ENCODE measurements at regions of chr17 and their contacts with region 1.

Region 1: DNA sequence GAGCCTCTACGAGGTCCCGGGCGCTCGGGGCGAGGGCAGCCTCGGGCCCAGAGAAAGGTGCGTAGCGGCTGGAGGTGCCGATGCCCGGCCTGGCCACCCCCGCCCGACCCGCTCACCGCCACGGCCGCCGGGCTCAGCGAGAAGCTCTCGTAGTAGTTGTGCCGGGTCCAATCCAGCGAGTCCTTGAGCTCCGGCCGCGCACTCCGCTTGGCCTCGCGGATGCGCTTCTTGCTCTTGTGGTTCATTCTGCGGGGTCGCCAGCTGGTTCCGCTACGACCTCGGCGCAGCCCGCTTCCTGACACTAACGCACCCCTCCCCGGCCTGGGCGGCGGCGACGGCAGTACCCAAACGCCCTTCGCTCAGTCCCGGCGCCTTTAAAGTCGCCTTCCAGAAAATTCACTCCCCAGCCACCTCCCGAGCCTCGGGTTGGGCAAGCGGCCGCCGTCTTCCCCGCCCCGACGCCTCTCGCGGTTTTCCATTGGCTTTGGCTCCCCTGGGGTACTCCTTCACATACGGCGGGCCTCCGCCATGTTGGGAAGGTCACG is at the start of gene JMJD6:
- DNase-seq: peak in 11 of 14 experiments; percentile 88 to 98 (median 92)
- ATAC-seq: peak; percentile 81
- H3K4me3 ChIP-seq: peak within 1 kb of the TSS; percentile 77
- H3K4me3 Mint-ChIP-seq: peak within 1 kb of the TSS; percentile 100
- H3K27ac ChIP-seq: peak within 1 kb of the TSS; percentile 93 to 97
- H3K27ac Mint-ChIP-seq: peak within 1 kb of the TSS; percentile 99
- H3K4me1 ChIP-seq: peaks cover 80% of the 10 kb centered on the region
- H3K4me1 Mint-ChIP-seq: peaks cover 50% of the 10 kb centered on the region
- H3K27me3 ChIP-seq: no peaks in the 10 kb centered on the region
- H3K27me3 Mint-ChIP-seq: no peaks in the 10 kb centered on the region
- CTCF ChIP-seq: no peak
- total RNA-seq, gene JMJD6: 133 to 134 TPM

Region 2: DNA sequence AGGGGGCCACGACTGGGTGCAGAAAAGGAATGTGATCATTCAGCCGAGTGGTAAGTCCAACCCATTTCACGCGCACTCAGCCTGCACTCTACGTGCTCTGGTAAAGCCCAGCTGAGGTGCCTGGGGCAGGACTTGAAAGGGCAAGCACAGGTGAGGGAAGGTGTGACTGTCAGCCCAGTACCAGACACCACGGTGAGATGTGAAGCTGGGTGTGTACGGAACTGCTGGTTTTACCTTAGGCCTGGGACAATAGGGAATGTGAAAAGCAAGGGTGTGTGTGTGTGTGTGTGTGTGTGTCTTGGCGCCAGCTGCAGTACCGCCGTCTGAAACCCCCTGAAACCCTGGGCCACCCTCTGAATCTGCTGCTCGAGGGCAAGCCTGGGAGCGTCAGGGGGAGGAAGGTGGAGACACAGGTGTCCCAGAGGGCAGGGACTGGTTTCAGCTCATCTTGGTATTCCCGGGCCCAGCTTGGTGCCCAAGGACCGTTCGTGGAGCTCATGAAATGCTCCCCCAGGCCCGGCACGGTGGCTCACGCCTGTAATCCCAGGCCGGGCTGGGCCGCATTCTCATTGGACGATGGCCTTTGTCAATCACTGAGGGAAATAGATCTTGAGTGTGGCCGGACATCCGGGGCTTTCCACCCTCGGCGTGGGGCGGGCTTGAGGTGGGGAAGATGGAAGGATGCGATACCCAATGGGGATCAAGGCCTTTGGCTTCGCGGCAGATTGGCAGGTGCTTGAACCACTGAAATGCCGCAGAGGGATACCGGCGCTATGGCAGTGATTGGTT is 55.0 kb before region 1 on chr17:
- CTCF ChIA-PET with region 1: no interaction called
- POLR2A ChIA-PET with region 1: interaction called, 19 read pairs
- intact Hi-C with region 1: loop called (anchors 5 kb)
- DNase-seq: peak; percentile 95 to 100 (median 98)
- ATAC-seq: peak; percentile 98
- H3K4me3 ChIP-seq: peak overlapping the region; percentile 69
- H3K4me3 Mint-ChIP-seq: peak overlapping the region; percentile 88
- H3K27ac ChIP-seq: peak overlapping the region; percentile 72 to 81
- H3K27ac Mint-ChIP-seq: peak overlapping the region; percentile 93
- H3K4me1 ChIP-seq: peaks cover 30% of the 10 kb centered on the region
- H3K4me1 Mint-ChIP-seq: peaks cover 35% of the 10 kb centered on the region
- H3K27me3 ChIP-seq: no peaks in the 10 kb centered on the region
- H3K27me3 Mint-ChIP-seq: no peaks in the 10 kb centered on the region
- CTCF ChIP-seq: no peak

Region 3: GRCh38 chr17:76737082-76737675 is 10.9 kb after region 1 on chr17 and contains the start of gene SRSF2:
- CTCF ChIA-PET with region 1: interaction called, 15 read pairs
- POLR2A ChIA-PET with region 1: interaction called, 165 read pairs
- intact Hi-C with region 1: loop called (anchors 1 kb)
- DNase-seq: peak; percentile 95 to 99 (median 98)
- ATAC-seq: peak; percentile 64
- H3K4me3 ChIP-seq: peak within 1 kb of the TSS; percentile 96
- H3K4me3 Mint-ChIP-seq: peak within 1 kb of the TSS; percentile 96
- H3K27ac ChIP-seq: peak within 1 kb of the TSS; percentile 99
- H3K27ac Mint-ChIP-seq: peak within 1 kb of the TSS; percentile 96
- H3K4me1 ChIP-seq: peaks cover 37% of the 10 kb centered on the region
- H3K4me1 Mint-ChIP-seq: peaks cover 60% of the 10 kb centered on the region
- H3K27me3 ChIP-seq: no peaks in the 10 kb centered on the region
- H3K27me3 Mint-ChIP-seq: no peaks in the 10 kb centered on the region
- CTCF ChIP-seq: no peak
- total RNA-seq, gene SRSF2: 448 to 460 TPM

Region 4: GRCh38 chr17:76781056-76781982 is 55.0 kb after region 1 on chr17:
- CTCF ChIA-PET with region 1: interaction called, 3 read pairs
- POLR2A ChIA-PET with region 1: no interaction called
- intact Hi-C with region 1: loop called in 1 of 2 experiments (anchors 5 kb)
- DNase-seq: peak in 4 of 14 experiments; percentile 19 to 42 (median 38)
- ATAC-seq: peak; percentile 62
- H3K4me3 ChIP-seq: no peak overlapping the region
- H3K4me3 Mint-ChIP-seq: no peak overlapping the region
- H3K27ac ChIP-seq: no peak overlapping the region
- H3K27ac Mint-ChIP-seq: peak overlapping the region; percentile 17
- H3K4me1 ChIP-seq: no peaks in the 10 kb centered on the region
- H3K4me1 Mint-ChIP-seq: no peaks in the 10 kb centered on the region
- H3K27me3 ChIP-seq: no peaks in the 10 kb centered on the region
- H3K27me3 Mint-ChIP-seq: no peaks in the 10 kb centered on the region
- CTCF ChIP-seq: no peak

Region 5: DNA sequence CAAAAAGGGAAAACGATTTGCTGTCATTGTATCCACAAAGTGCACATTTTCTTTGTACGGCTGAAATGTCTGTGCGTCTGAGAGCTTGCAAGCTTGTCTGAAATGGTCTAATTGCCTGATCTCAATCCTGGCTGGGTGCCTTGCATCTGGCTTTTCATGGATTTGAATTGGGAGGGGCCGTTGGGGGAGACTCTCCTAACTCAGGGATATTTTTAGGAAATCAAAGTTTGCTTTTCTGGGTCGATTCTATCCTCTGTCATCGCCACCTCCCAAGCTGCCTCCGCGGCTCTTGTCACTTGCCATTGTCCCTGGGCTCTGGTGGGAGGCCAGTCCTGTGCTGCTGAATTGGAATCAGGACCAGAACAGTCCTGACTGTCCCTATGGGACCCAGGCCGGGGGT is 108.6 kb after region 1 on chr17:
- CTCF ChIA-PET with region 1: no interaction called
- POLR2A ChIA-PET with region 1: no interaction called
- intact Hi-C with region 1: loop called in 1 of 2 experiments (anchors 5 kb)
- DNase-seq: no peak
- ATAC-seq: no peak
- H3K4me3 ChIP-seq: no peak overlapping the region
- H3K4me3 Mint-ChIP-seq: no peak overlapping the region
- H3K27ac ChIP-seq: no peak overlapping the region
- H3K27ac Mint-ChIP-seq: no peak overlapping the region
- H3K4me1 ChIP-seq: peaks cover 7% of the 10 kb centered on the region
- H3K4me1 Mint-ChIP-seq: peaks cover 3% of the 10 kb centered on the region
- H3K27me3 ChIP-seq: peaks cover 0 to 1% of the 10 kb centered on the region in 2 experiments
- H3K27me3 Mint-ChIP-seq: peaks cover 9% of the 10 kb centered on the region
- CTCF ChIP-seq: no peak

Region 6: DNA sequence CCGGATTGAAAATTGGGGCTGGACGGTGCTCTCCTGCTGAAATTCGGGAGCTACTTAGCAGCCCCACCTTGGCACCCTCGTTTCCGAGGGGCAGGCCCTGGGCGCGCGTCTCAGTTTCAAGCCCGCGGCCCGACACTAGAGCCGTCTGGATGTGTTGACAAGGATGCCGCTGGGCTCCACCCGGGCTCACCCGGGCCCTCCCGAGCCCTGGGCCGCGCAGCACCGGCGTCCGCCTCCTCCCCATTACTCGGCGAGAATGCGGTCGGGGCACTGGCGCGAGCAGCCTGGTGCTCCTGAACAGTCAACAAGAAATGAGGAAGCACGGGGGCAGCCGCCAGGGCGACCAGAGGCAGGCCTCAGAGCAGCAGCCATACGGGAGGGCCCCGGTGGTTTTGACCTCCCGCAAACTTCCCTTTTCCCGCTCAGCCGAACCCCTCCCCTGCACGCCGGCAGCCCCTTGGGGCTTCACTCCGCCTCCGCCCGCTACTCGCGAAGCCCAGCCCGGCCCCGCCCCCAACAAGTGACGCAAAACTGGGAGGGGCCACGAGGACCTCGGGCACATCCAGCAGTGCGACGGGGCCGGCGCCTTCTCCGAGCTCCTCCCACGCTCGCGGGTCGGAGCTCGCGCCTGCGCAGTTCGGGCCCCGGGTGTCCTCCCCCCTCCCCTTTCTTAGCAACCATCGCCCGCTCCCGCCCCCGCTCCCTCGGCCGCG is 414.0 kb after region 1 on chr17:
- CTCF ChIA-PET with region 1: no interaction called
- POLR2A ChIA-PET with region 1: no interaction called
- intact Hi-C with region 1: loop called in 1 of 2 experiments (anchors 5 kb)
- DNase-seq: peak; percentile 99 to 100 (median 100)
- ATAC-seq: peak; percentile 88
- H3K4me3 ChIP-seq: peak overlapping the region; percentile 74
- H3K4me3 Mint-ChIP-seq: peak overlapping the region; percentile 90
- H3K27ac ChIP-seq: peak overlapping the region; percentile 84 to 86
- H3K27ac Mint-ChIP-seq: peak overlapping the region; percentile 95
- H3K4me1 ChIP-seq: peaks cover 46% of the 10 kb centered on the region
- H3K4me1 Mint-ChIP-seq: peaks cover 61% of the 10 kb centered on the region
- H3K27me3 ChIP-seq: no peaks in the 10 kb centered on the region
- H3K27me3 Mint-ChIP-seq: no peaks in the 10 kb centered on the region
- CTCF ChIP-seq: no peak

Measured in CD4-positive, alpha-beta T cell (primary cell).